Activated B cell treated with CpG ODN at 0.5 μM for 24 hours (primary cell): ENCODE measurements at regions of chr1 and their contacts with region 1.

Region 1: DNA sequence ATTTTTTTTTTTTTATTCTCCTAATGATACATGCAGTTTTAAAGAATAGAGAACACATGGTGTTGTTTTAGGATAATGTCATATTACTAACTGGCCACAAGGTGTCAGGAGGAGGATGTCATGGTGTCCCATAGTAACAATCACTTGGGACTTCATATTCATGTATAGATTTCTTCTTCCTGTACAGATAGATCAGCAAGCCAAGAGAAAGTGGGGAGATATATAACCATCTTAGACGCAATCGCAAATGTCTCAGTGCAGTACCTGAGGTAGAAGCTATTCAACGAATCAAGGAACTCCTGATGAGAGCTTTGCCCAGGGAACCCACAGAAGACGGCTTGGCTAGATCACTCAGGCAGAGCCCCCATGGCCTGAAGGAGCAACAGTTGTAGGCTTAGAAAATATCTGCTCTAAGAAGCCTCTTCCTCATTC is 12.3 kb downstream of the OR2T11 start:
- DNase-seq: no peak
- ATAC-seq: peak; percentile 97
- H3K4me3 Mint-ChIP-seq: no peak overlapping the region
- H3K27ac Mint-ChIP-seq: peak overlapping the region; percentile 84
- H3K4me1 Mint-ChIP-seq: peaks cover 12% of the 10 kb centered on the region
- H3K27me3 Mint-ChIP-seq: no peaks in the 10 kb centered on the region
- CTCF ChIP-seq: no peak

Region 2: GRCh38 chr1:247749870-247750269 is 872.7 kb before region 1 on chr1:
- CTCF ChIA-PET with region 1: no interaction called
- POLR2A ChIA-PET with region 1: no interaction called
- intact Hi-C with region 1: no loop called
- DNase-seq: no peak
- ATAC-seq: no peak
- H3K4me3 Mint-ChIP-seq: no peak overlapping the region
- H3K27ac Mint-ChIP-seq: no peak overlapping the region
- H3K4me1 Mint-ChIP-seq: no peaks in the 10 kb centered on the region
- H3K27me3 Mint-ChIP-seq: no peaks in the 10 kb centered on the region
- CTCF ChIP-seq: no peak

Region 3: GRCh38 chr1:247840818-247841217 is 781.8 kb before region 1 on chr1:
- CTCF ChIA-PET with region 1: no interaction called
- POLR2A ChIA-PET with region 1: no interaction called
- intact Hi-C with region 1: no loop called
- DNase-seq: no peak
- ATAC-seq: no peak
- H3K4me3 Mint-ChIP-seq: no peak overlapping the region
- H3K27ac Mint-ChIP-seq: no peak overlapping the region
- H3K4me1 Mint-ChIP-seq: no peaks in the 10 kb centered on the region
- H3K27me3 Mint-ChIP-seq: no peaks in the 10 kb centered on the region
- CTCF ChIP-seq: no peak

Region 4: DNA sequence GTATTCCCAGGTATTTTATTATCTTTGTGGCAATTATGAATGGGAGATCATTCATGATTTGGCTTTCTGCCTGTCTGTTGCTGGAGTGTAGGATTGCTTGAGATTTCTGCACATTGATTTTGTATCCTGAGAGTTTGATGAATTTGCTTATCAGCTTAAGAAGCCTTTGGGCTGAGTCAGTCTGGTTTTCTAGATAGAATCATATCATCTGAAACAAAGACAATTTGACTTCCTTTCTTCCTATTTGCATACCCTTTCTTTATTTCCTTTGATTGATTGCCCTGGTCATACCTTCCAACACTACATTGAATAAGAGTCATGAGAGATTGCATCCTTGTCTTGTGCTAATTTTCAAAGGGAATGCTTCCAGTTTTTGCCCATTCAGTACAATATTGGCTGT is 567.9 kb before region 1 on chr1:
- CTCF ChIA-PET with region 1: no interaction called
- POLR2A ChIA-PET with region 1: no interaction called
- intact Hi-C with region 1: no loop called
- DNase-seq: no peak
- ATAC-seq: no peak
- H3K4me3 Mint-ChIP-seq: no peak overlapping the region
- H3K27ac Mint-ChIP-seq: no peak overlapping the region
- H3K4me1 Mint-ChIP-seq: no peaks in the 10 kb centered on the region
- H3K27me3 Mint-ChIP-seq: no peaks in the 10 kb centered on the region
- CTCF ChIP-seq: no peak

Region 5: DNA sequence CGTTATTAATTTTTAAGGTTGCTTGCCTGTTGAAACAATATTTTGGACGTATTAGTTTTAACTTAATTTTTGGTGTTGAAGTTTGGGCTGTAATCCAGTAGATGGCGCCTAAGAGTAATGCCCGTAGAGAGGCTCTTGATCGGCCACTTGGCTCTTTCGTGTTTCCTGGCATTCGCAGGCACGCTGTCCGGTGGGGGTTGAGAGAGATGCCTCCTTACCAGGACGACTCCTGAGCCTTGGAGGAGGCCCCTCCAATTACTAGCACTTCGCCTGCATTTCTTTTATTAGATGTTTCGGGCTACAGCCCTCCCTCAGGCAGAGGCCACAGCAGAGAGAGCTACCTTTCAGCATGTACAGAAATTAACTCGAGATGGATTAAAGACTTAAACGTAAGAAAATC is 379.4 kb before region 1 on chr1:
- CTCF ChIA-PET with region 1: no interaction called
- POLR2A ChIA-PET with region 1: no interaction called
- intact Hi-C with region 1: loop called (anchors 5 kb)
- DNase-seq: no peak
- ATAC-seq: no peak
- H3K4me3 Mint-ChIP-seq: no peak overlapping the region
- H3K27ac Mint-ChIP-seq: no peak overlapping the region
- H3K4me1 Mint-ChIP-seq: peaks cover 2% of the 10 kb centered on the region
- H3K27me3 Mint-ChIP-seq: peaks cover 12% of the 10 kb centered on the region
- CTCF ChIP-seq: no peak

Region 6: DNA sequence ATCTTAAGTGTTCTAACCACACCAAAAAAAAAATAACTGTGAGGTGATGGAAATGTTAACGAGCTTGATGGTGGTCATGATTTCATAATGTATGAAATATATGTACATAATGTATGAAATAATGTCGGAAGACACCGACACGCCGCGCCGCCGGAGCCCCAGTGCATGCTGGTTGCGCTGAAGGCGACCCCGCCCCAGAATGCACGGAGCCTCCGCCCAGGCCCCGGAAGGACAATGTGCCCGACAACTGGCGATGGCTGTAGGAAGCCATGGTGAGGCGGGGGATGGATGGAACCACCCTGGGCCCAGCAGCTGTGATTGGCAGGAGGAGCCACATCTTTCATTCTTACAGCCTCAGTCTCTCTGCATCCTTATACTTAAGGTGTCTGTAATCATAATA is 32.5 kb before region 1 on chr1:
- CTCF ChIA-PET with region 1: no interaction called
- POLR2A ChIA-PET with region 1: no interaction called
- intact Hi-C with region 1: no loop called
- DNase-seq: no peak
- ATAC-seq: no peak
- H3K4me3 Mint-ChIP-seq: no peak overlapping the region
- H3K27ac Mint-ChIP-seq: no peak overlapping the region
- H3K4me1 Mint-ChIP-seq: peaks cover 3% of the 10 kb centered on the region
- H3K27me3 Mint-ChIP-seq: no peaks in the 10 kb centered on the region
- CTCF ChIP-seq: no peak

Region 7: GRCh38 chr1:248686815-248687214 is 64.2 kb after region 1 on chr1:
- CTCF ChIA-PET with region 1: interaction called, 67 read pairs
- POLR2A ChIA-PET with region 1: interaction called, 3 read pairs
- intact Hi-C with region 1: loop called (anchors 1 kb)
- DNase-seq: no peak
- ATAC-seq: peak; percentile 36
- H3K4me3 Mint-ChIP-seq: peak overlapping the region; percentile 2
- H3K27ac Mint-ChIP-seq: no peak overlapping the region
- H3K4me1 Mint-ChIP-seq: peaks cover 37% of the 10 kb centered on the region
- H3K27me3 Mint-ChIP-seq: peaks cover 3% of the 10 kb centered on the region
- CTCF ChIP-seq: no peak

Region 8: GRCh38 chr1:248858891-248859889 is 236.6 kb after region 1 on chr1 and contains the start of gene ZNF692:
- CTCF ChIA-PET with region 1: no interaction called
- POLR2A ChIA-PET with region 1: no interaction called
- intact Hi-C with region 1: loop called (anchors 1 kb)
- DNase-seq: peak; percentile 97
- ATAC-seq: peak; percentile 88
- H3K4me3 Mint-ChIP-seq: peak within 1 kb of the TSS; percentile 87
- H3K27ac Mint-ChIP-seq: peak within 1 kb of the TSS; percentile 97
- H3K4me1 Mint-ChIP-seq: peaks cover 55% of the 10 kb centered on the region
- H3K27me3 Mint-ChIP-seq: no peaks in the 10 kb centered on the region
- CTCF ChIP-seq: no peak
- total RNA-seq, gene ZNF692: 36.4 and 40.3 TPM in 2 replicates